PC-3 (cell line): ENCODE measurements at regions of chr3 and their contacts with region 1.

Region 1: DNA sequence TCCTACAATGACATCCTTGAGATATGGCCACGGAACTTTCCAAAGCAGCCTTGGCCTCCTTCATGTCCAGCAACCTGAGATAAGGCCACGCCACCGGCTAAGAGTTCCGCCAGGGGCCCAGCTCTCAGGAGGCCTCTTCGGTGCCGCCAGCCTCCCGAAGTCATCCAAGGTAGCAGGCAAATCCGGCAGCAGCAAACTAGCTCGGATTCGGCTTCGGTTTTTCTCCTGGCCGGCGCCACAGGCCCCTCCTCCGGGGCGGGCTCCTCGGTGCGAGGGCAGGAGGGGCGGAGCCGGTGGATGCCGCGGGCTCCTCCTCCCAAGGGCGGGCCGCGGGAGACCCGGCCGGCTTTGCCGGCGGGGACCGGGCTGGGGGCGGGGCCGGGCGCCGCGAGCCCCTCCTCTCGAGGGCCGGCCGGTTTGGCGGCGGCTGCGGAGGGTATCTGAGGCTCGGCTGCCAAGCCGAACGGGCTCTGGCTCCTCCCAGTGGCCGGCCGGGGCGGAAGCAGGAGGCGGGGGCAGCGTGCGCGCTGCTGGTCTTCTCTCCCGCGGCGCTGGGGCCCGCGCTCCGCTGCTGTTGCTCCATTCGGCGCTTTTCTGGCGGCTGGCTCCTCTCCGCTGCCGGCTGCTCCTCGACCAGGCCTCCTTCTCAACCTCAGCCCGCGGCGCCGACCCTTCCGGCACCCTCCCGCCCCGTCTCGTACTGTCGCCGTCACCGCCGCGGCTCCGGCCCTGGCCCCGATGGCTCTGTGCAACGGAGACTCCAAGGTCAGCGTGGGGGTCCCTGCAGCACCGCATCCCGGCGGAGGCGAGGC is at the start of gene GMPS:
- DNase-seq: peak; percentile 97
- ATAC-seq: peak; percentile 85
- H3K4me3 ChIP-seq: peak within 1 kb of the TSS; percentile 79
- H3K27ac ChIP-seq: peak within 1 kb of the TSS; percentile 75
- H3K4me1 ChIP-seq: peaks cover 14% of the 10 kb centered on the region
- H3K27me3 ChIP-seq: no peaks in the 10 kb centered on the region
- CTCF ChIP-seq: peak; percentile 33; the same call in 1 of the 2 replicates
- total RNA-seq, gene GMPS: 42.2 and 43.3 TPM in 2 replicates

Region 2: GRCh38 chr3:155744626-155745324 is 125.6 kb before region 1 on chr3 and contains the start of gene PLCH1:
- CTCF ChIA-PET with region 1: no interaction called
- POLR2A ChIA-PET with region 1: no interaction called
- intact Hi-C with region 1: loop called (anchors 5 kb)
- DNase-seq: peak; percentile 81
- ATAC-seq: peak; percentile 59
- H3K4me3 ChIP-seq: peak within 1 kb of the TSS; percentile 91
- H3K27ac ChIP-seq: peak within 1 kb of the TSS; percentile 17
- H3K4me1 ChIP-seq: peaks cover 48% of the 10 kb centered on the region
- H3K27me3 ChIP-seq: no peaks in the 10 kb centered on the region
- CTCF ChIP-seq: no peak
- total RNA-seq, gene PLCH1: 4.1 and 4.5 TPM in 2 replicates